ENCODE measurements at regions of chr7 and their contacts with region 1.

Region 1: DNA sequence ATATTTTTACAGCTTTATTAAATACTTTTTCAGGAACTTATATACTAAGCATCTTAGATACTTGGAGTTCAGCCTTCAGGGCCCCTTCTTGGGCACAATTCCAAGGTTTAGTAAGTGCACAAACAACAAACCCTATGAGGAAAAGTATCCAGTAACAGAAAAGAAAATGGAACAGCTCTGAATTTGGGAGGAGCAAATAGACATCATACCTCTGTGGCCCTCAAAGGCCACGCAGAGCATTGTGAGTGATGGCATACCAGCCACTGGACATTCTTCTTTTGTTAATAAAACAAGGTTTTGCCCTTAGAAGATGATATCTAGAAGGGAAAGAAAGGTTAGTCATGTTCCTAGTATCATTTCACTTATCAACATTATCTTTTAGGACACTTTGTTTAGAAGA is 46.0 kb downstream of the ST7 start:
- DNase-seq: no peak
- CTCF ChIP-seq: no peak

Region 2: DNA sequence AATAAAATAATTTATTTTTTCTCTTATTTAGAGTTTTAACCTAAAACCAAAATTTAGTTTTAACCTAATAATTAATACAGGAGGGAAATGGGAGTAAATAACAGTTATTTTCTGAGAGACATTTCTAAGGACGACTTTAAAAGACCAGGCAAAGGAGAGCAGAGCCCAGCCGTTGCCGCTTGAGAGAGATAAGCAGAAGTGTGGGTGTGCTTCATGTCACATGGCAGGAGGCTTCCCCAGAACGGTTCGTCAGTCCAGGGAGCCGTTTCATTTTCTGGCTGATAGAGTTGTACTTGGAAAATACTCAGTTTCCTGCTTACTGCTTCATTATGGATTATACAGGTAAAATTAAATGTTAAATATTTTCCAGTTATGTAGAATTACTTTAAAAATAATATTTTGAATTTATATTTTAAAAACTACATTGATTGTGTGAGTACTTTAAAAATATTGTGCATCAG is 15.4 kb after region 1 on chr7:
- CTCF ChIA-PET with region 1: interaction called, 72 read pairs
- POLR2A ChIA-PET with region 1: no interaction called
- DNase-seq: peak; percentile 51
- CTCF ChIP-seq: no peak

Measured in GM10248 (cell line).